ENCODE measurements at regions of chr7 and their contacts with region 1.

Region 1: DNA sequence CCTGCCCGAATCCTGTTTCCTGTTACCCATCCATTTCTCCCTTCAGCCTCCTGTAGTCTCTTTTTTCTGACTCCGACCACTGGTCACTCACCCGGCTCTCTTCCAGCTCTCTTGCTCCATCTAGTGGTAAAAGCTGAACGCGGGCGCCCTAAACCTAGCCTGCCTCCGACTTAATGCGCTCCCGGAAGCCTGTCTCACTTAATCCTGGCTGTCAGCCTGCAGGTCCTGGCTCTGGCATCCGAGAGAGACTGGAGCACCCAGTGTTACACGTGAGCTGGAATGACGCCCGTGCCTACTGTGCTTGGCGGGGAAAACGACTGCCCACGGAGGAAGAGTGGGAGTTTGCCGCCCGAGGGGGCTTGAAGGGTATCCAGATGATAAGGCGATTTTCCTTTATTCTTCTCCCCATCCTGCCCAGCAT is 10.3 kb downstream of the SUMF2 start:
- DNase-seq: peak; percentile 68
- ATAC-seq: peak; percentile 94
- H3K4me3 ChIP-seq: no peak overlapping the region
- H3K27ac ChIP-seq: no peak overlapping the region
- H3K4me1 ChIP-seq: peaks cover 18% of the 10 kb centered on the region
- H3K27me3 ChIP-seq: no peaks in the 10 kb centered on the region
- CTCF ChIP-seq: peak; percentile 93
- EP300 ChIP-seq: no peak
- POLR2A ChIP-seq: no peak
- RAD21 ChIP-seq: peak; percentile 92

Region 2: DNA sequence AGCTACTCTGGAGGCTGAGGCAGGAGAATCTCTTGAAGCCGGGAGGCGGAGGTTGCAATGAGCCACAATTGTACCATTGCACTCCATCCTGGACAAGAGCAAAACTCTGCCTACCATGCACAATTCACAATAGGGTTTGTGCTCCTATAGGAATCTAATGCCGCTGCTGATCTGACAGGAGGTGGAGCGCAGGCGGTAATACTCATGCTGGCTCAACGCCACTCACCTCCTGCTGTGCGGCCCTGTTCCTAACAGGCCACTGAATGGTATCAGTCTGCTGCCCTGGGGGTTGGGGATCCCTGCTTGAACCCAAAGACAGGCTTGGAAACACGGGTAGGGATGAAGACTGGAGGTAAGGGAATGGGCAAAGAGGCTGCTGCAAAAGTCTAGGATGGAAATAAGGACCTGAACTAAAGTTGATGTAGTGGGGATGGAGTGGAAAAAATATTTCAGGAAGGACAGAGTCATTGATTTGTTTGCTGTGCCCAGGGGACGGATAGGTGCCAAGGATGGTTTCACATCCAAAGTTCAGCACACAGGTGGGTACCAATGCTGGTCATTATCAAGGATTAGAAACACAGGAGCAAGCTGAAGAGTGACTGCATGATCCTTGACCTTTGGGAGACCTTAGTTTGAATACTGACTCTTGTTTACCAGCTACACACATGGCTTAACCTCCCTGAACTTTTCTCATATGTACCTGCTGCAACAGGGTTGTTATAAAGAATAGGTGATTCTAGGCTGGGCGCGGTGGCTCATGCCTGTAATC is 120.5 kb before region 1 on chr7:
- CTCF ChIA-PET with region 1: no interaction called
- POLR2A ChIA-PET with region 1: no interaction called
- in situ Hi-C with region 1: no loop called
- intact Hi-C with region 1: no loop called
- DNase-seq: no peak
- ATAC-seq: no peak
- H3K4me3 ChIP-seq: no peak overlapping the region
- H3K27ac ChIP-seq: no peak overlapping the region
- H3K4me1 ChIP-seq: peaks cover 43% of the 10 kb centered on the region
- H3K27me3 ChIP-seq: no peaks in the 10 kb centered on the region; a peak in 1 of 5 replicates
- CTCF ChIP-seq: no peak
- EP300 ChIP-seq: no peak
- POLR2A ChIP-seq: no peak
- RAD21 ChIP-seq: no peak

Region 3: DNA sequence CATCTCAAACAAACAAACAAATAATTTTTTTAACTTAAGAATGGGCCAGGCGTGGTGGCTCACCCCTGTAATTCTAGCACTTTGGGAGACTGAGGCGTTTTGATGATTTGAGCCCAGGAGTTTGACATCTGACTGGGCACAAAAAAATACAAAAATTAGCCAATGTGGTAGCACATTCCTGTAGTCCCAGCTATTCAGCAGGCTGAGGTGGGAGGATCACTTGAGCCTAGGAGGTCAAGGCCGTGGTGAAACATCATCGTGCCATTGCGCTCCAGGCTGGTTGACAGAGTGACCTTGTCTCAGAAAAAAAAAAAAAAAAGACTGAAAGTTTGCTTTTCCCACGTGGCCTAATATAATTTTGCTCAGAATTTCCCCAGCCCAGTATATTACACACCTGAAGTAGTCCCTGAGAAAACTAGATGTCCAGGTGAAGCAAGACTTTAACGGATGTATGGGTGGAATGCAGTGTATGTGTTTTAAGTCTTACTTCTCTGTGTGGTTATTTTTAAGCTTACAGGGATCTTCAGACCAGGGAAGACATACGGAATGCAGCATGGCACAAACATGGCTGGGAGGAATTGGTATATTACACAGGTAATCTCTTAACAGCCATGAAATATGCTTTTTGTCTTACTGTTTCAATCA is 77.4 kb before region 1 on chr7:
- CTCF ChIA-PET with region 1: no interaction called
- POLR2A ChIA-PET with region 1: interaction called, 3 read pairs
- in situ Hi-C with region 1: loop called (anchors 5 kb)
- intact Hi-C with region 1: loop called (anchors 2 kb)
- DNase-seq: peak; percentile 91
- ATAC-seq: peak; percentile 87
- H3K4me3 ChIP-seq: no peak overlapping the region; a peak in 1 of 6 replicates
- H3K27ac ChIP-seq: peak overlapping the region; percentile 64
- H3K4me1 ChIP-seq: peaks cover 53% of the 10 kb centered on the region
- H3K27me3 ChIP-seq: no peaks in the 10 kb centered on the region
- CTCF ChIP-seq: 0 out of 2 replicates have a peak, but pooled peaks have one; percentile 11
- EP300 ChIP-seq: peak; percentile 32 to 33; a peak in 1 of 4 replicates
- POLR2A ChIP-seq: no peak
- RAD21 ChIP-seq: no peak

Region 4: GRCh38 chr7:56003749-56004148 is 70.6 kb before region 1 on chr7:
- CTCF ChIA-PET with region 1: interaction called, 19 read pairs
- POLR2A ChIA-PET with region 1: interaction called, 5 read pairs
- in situ Hi-C with region 1: loop called (anchors 5 kb)
- intact Hi-C with region 1: loop called (anchors 1 kb)
- DNase-seq: no peak
- ATAC-seq: no peak
- H3K4me3 ChIP-seq: no peak overlapping the region
- H3K27ac ChIP-seq: no peak overlapping the region
- H3K4me1 ChIP-seq: peaks cover 77% of the 10 kb centered on the region
- H3K27me3 ChIP-seq: no peaks in the 10 kb centered on the region
- CTCF ChIP-seq: no peak
- EP300 ChIP-seq: no peak
- POLR2A ChIP-seq: no peak
- RAD21 ChIP-seq: no peak

Region 5: DNA sequence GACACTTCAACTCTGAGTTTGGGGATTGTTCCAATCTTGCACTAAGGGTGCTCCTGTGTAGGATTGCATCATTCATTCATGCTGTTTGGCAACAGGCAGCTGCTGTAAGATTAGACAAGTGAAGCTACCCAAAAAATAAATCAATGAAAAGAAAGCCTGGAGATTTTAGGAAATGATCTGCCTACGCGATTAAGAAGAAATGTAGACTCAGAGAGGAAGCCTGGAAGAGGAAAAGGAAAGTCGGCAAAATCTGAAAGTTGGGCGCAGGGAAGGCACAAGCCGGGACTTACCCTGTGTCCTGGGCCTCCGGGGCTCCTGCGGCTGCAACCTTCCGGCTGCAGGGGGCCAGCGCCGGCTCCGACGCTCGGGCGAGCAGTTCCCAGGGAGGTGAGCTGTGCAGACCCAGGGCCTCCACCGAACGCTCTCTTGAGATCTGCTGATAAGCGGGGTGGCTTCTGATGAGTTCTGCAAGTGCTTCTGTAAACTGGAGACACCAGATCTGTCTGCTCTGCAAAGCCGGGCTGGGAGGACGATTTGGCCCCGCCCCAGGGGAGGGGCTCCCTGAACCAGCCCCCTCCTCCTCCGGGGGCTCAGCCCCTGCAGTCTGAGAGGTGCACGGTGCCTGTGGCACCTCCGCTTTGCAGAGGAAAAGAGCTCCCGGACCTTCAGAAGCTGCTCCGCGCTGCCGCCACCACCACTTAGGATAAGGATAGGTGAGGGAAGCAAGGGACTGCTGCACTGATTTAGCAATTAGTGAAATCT is 40.5 kb before region 1 on chr7:
- CTCF ChIA-PET with region 1: no interaction called
- POLR2A ChIA-PET with region 1: no interaction called
- in situ Hi-C with region 1: no loop called
- intact Hi-C with region 1: no loop called
- DNase-seq: peak; percentile 88
- ATAC-seq: peak; percentile 89
- H3K4me3 ChIP-seq: peak overlapping the region; percentile 77 to 98 (median 80)
- H3K27ac ChIP-seq: peak overlapping the region; percentile 87
- H3K4me1 ChIP-seq: peaks cover 45% of the 10 kb centered on the region
- H3K27me3 ChIP-seq: no peaks in the 10 kb centered on the region; a peak in 1 of 5 replicates
- CTCF ChIP-seq: peak; percentile 34
- EP300 ChIP-seq: no peak
- POLR2A ChIP-seq: peak; percentile 66 to 85
- RAD21 ChIP-seq: peak; percentile 10; the same call in 1 of the 2 replicates